ENCODE measurements at regions of chr3 and their contacts with region 1.

Region 1: DNA sequence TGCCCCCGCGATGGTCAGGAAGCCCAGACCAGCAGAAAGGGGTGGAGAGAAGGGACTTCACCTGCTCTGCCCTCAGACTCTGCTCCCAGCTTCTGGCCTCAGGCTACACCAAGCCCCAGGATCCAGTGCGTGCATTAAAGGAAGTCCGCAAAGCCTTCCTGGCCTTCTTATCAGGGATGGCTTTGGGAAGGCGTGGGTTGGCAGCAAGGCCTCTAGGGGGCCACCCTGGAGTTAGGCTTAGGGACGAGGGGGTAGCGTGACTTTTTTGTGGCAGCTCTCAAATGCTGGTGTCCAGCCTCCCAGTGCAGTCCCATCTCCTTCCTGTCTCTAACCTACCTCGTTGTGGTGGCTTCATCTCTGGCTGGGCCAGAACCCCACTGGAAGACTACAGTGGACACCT is 18.9 kb upstream of the RPL29 start:
- DNase-seq: peak in 2 of 3 donors; percentile 18 to 33
- H3K4me3 ChIP-seq: no peak overlapping the region
- H3K27ac ChIP-seq: no peak overlapping the region
- H3K4me1 ChIP-seq: peaks cover 0 to 16% (median 6%) of the 10 kb centered on the region in 4 experiments
- H3K27me3 ChIP-seq: no peaks in the 10 kb centered on the region

Region 2: DNA sequence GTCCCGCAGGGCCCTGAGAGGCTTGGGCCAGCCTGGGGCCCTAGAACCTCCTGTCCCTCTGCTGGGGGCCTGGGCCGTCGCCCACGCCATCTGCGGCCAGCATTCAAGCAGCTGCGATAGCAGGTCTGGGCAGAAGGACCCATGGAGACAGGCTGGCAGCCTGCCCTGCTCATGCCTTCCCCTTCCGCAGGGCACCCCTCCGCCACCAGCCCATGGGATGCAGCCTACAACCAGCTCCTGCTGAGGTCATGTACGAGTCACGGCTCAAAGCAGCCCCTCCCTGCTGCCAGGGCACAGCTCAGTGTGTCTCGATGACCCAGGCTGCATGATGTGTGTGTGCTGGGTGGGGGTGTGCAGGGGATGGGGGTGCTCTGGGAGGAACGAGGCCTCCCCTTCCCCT is 14.0 kb after region 1 on chr3:
- CTCF ChIA-PET with region 1: interaction called, 11 read pairs
- POLR2A ChIA-PET with region 1: no interaction called
- DNase-seq: no peak
- H3K4me3 ChIP-seq: no peak overlapping the region
- H3K27ac ChIP-seq: no peak overlapping the region
- H3K4me1 ChIP-seq: peaks cover 0 to 5% (median 3%) of the 10 kb centered on the region in 4 experiments
- H3K27me3 ChIP-seq: no peaks in the 10 kb centered on the region

Region 3: GRCh38 chr3:52041118-52041731 is 26.6 kb after region 1 on chr3:
- CTCF ChIA-PET with region 1: interaction called, 13 read pairs
- POLR2A ChIA-PET with region 1: no interaction called
- DNase-seq: no peak
- H3K4me3 ChIP-seq: no peak overlapping the region
- H3K27ac ChIP-seq: no peak overlapping the region
- H3K4me1 ChIP-seq: peaks cover 0 to 11% (median 6%) of the 10 kb centered on the region in 4 experiments
- H3K27me3 ChIP-seq: no peaks in the 10 kb centered on the region

Region 4: GRCh38 chr3:52204337-52205073 is 189.9 kb after region 1 on chr3:
- CTCF ChIA-PET with region 1: no interaction called
- POLR2A ChIA-PET with region 1: no interaction called
- DNase-seq: no peak
- H3K4me3 ChIP-seq: no peak overlapping the region
- H3K27ac ChIP-seq: no peak overlapping the region
- H3K4me1 ChIP-seq: peaks cover 0 to 25% (median 4%) of the 10 kb centered on the region in 4 experiments
- H3K27me3 ChIP-seq: no peaks in the 10 kb centered on the region

Measured in common myeloid progenitor, CD34-positive (primary cell).